WTC11 (cell line): ENCODE measurements at regions of chr12 and their contacts with region 1.

Region 1: DNA sequence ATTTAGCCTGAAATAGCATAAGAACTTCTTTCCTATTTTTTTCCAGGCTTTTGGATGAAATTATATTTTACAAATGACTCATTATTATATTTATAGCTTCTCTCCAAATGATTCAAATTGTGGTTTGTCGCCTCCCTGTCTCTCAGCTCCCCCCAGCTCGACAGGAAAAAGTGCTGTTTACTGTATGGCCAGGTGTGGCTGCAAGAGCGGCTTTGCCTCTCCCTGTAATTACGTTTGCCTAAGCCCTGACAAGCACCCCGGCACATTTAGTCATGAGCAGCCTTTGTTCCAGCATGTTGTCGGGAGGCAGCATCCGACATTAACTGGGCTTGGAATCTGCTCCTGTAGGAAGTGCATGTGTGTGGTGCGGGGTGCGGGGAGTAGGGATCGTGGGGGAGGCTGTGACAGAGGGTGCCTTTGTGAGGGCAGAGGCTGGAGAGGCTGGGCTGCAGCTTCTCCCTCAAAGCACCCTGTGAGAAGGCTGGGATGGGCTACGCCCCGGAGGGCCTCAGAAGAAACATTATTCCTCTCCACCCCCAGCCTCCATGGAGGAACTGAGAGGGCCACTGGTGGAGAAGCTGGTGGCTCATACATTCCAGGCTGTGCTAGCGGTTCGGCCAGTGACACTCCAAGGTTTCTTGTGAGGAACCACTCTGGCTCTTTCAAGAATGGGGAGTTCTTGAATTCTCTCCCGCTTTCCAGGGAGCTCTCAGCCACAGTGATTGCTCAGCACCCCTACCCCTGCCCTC is 42.1 kb upstream of the CTDSP2 start:
- DNase-seq: peak; percentile 34
- ATAC-seq: peak; percentile 73
- H3K4me3 Mint-ChIP-seq: peak overlapping the region; percentile 48
- H3K27ac Mint-ChIP-seq: peak overlapping the region; percentile 13; the same call in 1 of the 2 replicates
- H3K4me1 Mint-ChIP-seq: peaks cover 28% of the 10 kb centered on the region
- H3K27me3 Mint-ChIP-seq: no peaks in the 10 kb centered on the region; the same call in none of the 2 replicates
- CTCF ChIP-seq: no peak

Region 2: GRCh38 chr12:57771708-57772428 is 116.7 kb before region 1 on chr12 and contains the start of gene METTL1:
- CTCF ChIA-PET with region 1: no interaction called
- POLR2A ChIA-PET with region 1: no interaction called
- DNase-seq: peak; percentile 97
- ATAC-seq: peak; percentile 89
- H3K4me3 Mint-ChIP-seq: peak within 1 kb of the TSS; percentile 97
- H3K27ac Mint-ChIP-seq: peak within 1 kb of the TSS; percentile 100
- H3K4me1 Mint-ChIP-seq: peaks cover 11% of the 10 kb centered on the region
- H3K27me3 Mint-ChIP-seq: peaks cover 31% of the 10 kb centered on the region
- CTCF ChIP-seq: no peak
- total RNA-seq, gene METTL1: 25.5 to 31.7 TPM (median 28.6 TPM) in 3 replicates

Region 3: GRCh38 chr12:57846577-57847319 is 41.8 kb before region 1 on chr12 and contains the start of gene CTDSP2:
- CTCF ChIA-PET with region 1: interaction called, 58 read pairs
- POLR2A ChIA-PET with region 1: interaction called, 64 read pairs
- DNase-seq: peak; percentile 100
- ATAC-seq: peak; percentile 65
- H3K4me3 Mint-ChIP-seq: peak within 1 kb of the TSS; percentile 69
- H3K27ac Mint-ChIP-seq: peak within 1 kb of the TSS; percentile 95
- H3K4me1 Mint-ChIP-seq: peaks cover 51% of the 10 kb centered on the region
- H3K27me3 Mint-ChIP-seq: peaks cover 14% of the 10 kb centered on the region
- CTCF ChIP-seq: no peak
- total RNA-seq, gene CTDSP2: 97.0 to 122 TPM (median 101 TPM) in 3 replicates

Region 4: GRCh38 chr12:57852620-57853500 is 35.7 kb before region 1 on chr12:
- CTCF ChIA-PET with region 1: interaction called, 58 read pairs
- POLR2A ChIA-PET with region 1: interaction called, 64 read pairs
- DNase-seq: peak; percentile 83
- ATAC-seq: peak; percentile 82
- H3K4me3 Mint-ChIP-seq: peak overlapping the region; percentile 66
- H3K27ac Mint-ChIP-seq: peak overlapping the region; percentile 91
- H3K4me1 Mint-ChIP-seq: peaks cover 40% of the 10 kb centered on the region
- H3K27me3 Mint-ChIP-seq: peaks cover 25% of the 10 kb centered on the region
- CTCF ChIP-seq: no peak

Region 5: DNA sequence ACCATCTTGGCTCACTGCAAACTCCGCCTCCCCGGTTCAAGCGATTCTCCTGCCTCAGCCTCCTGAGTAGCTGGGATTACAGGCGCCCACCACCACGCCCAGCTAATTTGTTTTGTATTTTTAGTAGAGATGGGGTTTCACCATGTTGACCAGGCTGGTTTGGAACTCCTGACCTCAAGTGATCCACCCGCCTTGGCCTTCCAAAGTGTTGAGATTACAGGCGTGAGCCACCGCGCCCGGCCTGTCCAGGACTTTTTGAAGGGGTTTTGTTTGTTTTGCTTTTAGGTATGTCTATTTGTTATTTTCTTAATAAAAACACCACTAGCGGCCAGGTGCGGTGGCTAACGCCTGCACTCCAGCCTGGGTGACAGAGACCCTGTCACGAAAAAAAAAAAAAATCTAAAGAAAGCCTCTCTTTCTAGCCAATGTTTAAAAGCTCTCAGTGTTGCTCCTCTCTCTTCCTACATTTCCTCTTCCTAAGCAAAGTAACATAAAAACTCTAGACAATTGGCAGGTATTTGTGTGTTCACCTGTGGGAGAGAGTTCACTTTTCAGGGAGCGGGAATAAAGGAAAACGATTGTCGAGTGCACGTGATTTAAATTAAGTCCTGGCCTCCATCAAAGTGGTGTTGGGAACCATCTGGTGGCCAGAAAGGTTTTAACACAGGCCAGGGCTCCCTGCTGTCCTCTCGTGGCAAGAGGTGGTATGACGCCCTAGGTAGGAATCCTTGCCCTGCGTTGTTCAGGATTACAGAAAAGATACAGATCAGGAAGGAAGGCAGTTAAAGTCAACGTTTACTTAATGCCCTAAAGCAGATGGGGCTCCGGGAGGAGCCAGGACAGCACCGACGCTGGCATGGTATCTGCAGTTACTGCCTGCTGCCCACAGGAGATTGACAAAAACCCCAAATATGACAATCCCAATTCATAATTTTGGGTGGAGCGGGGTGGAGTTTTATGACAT is 16.5 kb after region 1 on chr12:
- CTCF ChIA-PET with region 1: interaction called, 26 read pairs
- POLR2A ChIA-PET with region 1: no interaction called
- DNase-seq: peak; percentile 89
- ATAC-seq: peak; percentile 94
- H3K4me3 Mint-ChIP-seq: no peak overlapping the region; the same call in 1 of the 2 replicates
- H3K27ac Mint-ChIP-seq: no peak overlapping the region
- H3K4me1 Mint-ChIP-seq: peaks cover 5% of the 10 kb centered on the region
- H3K27me3 Mint-ChIP-seq: peaks cover 14% of the 10 kb centered on the region
- CTCF ChIP-seq: peak; percentile 100